PC-9 (cell line): ENCODE measurements at regions of chr22 and their contacts with region 1.

Region 1: GRCh38 chr22:17754233-17754925 is 19.9 kb downstream of the BID start:
- DNase-seq: peak in 1 of 2 experiments; percentile 9
- H3K4me3 ChIP-seq: no peak overlapping the region
- H3K27ac ChIP-seq: no peak overlapping the region
- H3K4me1 ChIP-seq: peaks cover 12% of the 10 kb centered on the region; the same call in 1 of the 2 replicates
- H3K27me3 ChIP-seq: no peaks in the 10 kb centered on the region
- CTCF ChIP-seq: peak; percentile 42

Region 2: GRCh38 chr22:17587629-17588028 is 166.8 kb before region 1 on chr22:
- CTCF ChIA-PET with region 1: no interaction called
- POLR2A ChIA-PET with region 1: interaction called, 23 read pairs
- intact Hi-C with region 1: no loop called
- DNase-seq: no peak
- H3K4me3 ChIP-seq: no peak overlapping the region
- H3K27ac ChIP-seq: no peak overlapping the region
- H3K4me1 ChIP-seq: no peaks in the 10 kb centered on the region
- H3K27me3 ChIP-seq: no peaks in the 10 kb centered on the region
- CTCF ChIP-seq: no peak

Region 3: DNA sequence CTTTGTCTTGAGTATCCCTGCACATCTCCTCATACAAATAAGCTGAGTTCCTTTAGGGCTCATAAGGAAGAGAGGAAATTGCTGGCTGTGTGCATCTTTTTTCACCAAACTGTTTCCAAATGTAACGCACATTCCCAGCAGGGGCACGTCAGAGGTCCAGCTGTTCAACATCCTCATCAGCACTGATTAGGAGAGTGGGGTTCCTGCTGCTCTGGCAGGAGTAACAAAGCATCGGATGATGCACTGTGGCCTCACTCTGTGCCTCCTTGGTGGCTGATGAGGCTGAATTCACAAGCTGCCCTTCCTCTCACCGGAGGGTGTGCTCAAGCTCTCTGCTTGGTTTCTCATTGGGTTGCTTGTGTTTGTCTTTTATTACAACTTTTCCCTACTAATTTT is 1459.7 kb after region 1 on chr22:
- CTCF ChIA-PET with region 1: no interaction called
- POLR2A ChIA-PET with region 1: interaction called, 16 read pairs
- intact Hi-C with region 1: no loop called
- DNase-seq: no peak
- H3K4me3 ChIP-seq: no peak overlapping the region
- H3K27ac ChIP-seq: no peak overlapping the region
- H3K4me1 ChIP-seq: peaks cover 13% of the 10 kb centered on the region; the same call in 1 of the 2 replicates
- H3K27me3 ChIP-seq: no peaks in the 10 kb centered on the region
- CTCF ChIP-seq: no peak